Thyroid gland (tissue), 4 donors: ENCODE measurements at regions of chr20 and their contacts with region 1.

Region 1: DNA sequence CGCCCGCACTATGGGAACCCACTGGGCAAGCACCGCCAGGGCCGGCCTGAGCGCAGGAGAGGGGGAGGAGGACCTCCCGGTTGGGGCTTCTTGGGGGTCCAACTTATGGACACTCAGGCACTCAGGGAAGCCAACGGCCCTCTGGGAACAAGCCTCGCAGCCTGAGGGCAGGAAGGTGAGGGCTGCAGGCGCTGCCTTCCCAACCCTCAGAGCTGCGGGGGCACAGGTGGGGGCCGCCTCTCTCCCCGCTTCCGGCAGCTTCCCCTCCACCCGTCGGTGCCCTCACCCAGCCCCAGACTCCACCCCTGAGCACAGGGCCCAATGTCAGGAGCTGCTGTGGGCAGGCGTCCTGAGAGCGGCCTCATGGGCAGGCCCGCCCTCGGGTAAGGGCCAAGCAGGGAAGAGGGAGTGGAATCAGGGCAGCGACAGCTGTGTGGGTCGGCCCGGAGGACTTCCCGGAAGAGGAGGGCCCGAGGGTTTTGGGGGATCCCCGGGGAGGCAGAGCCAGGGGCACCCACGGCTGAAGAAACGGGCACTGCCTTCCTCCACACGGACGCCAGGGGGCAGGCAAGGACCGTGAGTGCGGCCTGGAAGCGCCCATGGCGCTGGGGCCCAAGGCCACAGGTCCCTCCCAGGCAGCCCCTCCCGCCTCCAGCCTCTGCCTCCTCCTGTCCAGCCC is 488 bp upstream of the PTK6 start:
- DNase-seq: peak; percentile 83 to 84
- H3K4me3 ChIP-seq: peak overlapping the region in 1 of 3 donors; percentile 16
- H3K27ac ChIP-seq: peak overlapping the region; percentile 62 to 76 (median 72)
- H3K4me1 ChIP-seq: peaks cover 11 to 21% of the 10 kb centered on the region in 2 donors
- H3K27me3 ChIP-seq: no peaks in the 10 kb centered on the region
- CTCF ChIP-seq: peak; percentile 86 to 99 (median 94)
- POLR2A ChIP-seq: peak in 1 of 2 donors; percentile 26

Region 2: DNA sequence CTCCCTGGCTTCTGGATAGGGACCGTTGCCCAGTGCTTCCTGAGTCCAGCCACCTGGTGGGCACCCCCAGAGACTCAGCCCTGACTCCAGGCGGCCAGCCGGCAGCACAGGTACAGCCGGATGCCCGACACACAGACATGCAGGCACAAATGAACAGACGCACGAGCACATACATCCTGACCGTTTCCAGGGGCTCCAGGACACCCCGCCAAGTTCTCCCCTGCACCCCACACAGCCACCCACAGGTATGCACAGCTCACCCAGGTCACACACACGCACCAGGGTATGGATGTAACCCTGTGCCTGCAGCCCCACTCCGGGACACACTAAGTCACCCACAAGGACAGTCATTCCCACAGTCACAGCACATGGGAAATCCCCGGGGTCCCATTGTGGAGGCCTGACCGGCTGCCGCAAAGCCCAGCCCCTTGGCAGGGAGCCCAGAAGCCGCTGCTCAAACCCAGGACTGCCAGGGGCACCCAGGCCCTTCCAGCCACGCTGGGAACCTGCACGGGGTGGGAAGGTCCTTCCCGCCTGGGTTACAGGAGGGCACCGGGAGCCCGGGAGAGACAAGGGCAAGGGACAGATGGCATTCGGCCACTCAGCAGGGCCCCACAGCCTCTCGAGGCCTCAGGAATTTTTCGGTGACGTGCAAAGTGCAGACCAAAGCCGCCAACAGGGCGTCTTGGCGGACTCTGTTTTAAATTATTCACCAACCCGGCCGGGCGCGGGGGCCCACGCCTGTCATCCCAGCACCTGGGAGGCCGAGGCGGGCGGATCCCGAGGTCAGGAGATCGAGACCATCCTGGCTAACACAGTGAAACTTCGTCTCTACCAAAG is 54.6 kb before region 1 on chr20:
- intact Hi-C with region 1: no loop called
- DNase-seq: peak; percentile 49 to 58
- H3K4me3 ChIP-seq: no peak overlapping the region
- H3K27ac ChIP-seq: no peak overlapping the region
- H3K4me1 ChIP-seq: no peaks in the 10 kb centered on the region
- H3K27me3 ChIP-seq: peaks cover 11% of the 10 kb centered on the region
- CTCF ChIP-seq: no peak
- POLR2A ChIP-seq: no peak

Region 3: GRCh38 chr20:63739130-63740069 is 201.7 kb after region 1 on chr20 and contains the start of gene SLC2A4RG:
- intact Hi-C with region 1: loop called (anchors 5 kb)
- DNase-seq: peak; percentile 84 to 87
- H3K4me3 ChIP-seq: peak within 1 kb of the TSS; percentile 39 to 66 (median 53)
- H3K27ac ChIP-seq: peak within 1 kb of the TSS; percentile 68 to 94 (median 91)
- H3K4me1 ChIP-seq: peaks cover 19 to 29% of the 10 kb centered on the region in 2 donors
- H3K27me3 ChIP-seq: no peaks in the 10 kb centered on the region
- CTCF ChIP-seq: no peak
- POLR2A ChIP-seq: no peak
- total RNA-seq, gene SLC2A4RG: 26.0 to 55.9 (median 39.3) TPM

Region 4: DNA sequence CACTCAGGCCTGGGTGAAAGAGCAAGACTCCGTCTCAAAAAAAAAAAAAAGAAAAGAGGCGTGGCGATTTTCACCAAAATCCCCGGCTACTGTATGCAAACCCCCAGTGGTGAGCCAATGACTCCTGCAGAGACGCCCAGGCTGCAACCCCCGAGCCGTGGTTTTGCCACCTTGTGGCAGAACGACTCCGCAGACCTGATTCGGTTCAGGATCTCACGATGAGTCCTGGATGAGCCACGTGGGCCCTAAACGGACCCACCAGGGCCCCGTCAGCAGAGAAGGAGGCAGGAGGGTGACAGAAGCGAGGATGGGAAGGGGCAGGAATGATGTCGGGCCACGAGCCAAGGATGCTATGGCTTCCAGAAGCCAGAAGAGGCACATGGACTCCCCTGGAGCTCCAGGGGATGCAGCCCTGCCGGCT is 244.4 kb after region 1 on chr20:
- intact Hi-C with region 1: loop called (anchors 10 kb)
- DNase-seq: no peak
- H3K4me3 ChIP-seq: no peak overlapping the region
- H3K27ac ChIP-seq: no peak overlapping the region
- H3K4me1 ChIP-seq: no peaks in the 10 kb centered on the region
- H3K27me3 ChIP-seq: no peaks in the 10 kb centered on the region
- CTCF ChIP-seq: no peak
- POLR2A ChIP-seq: no peak

Region 5: GRCh38 chr20:63864847-63865640 is 327.4 kb after region 1 on chr20 and contains the start of gene TPD52L2:
- intact Hi-C with region 1: loop called (anchors 5 kb)
- DNase-seq: peak; percentile 100
- H3K4me3 ChIP-seq: peak within 1 kb of the TSS; percentile 86 to 95 (median 87)
- H3K27ac ChIP-seq: peak within 1 kb of the TSS; percentile 90 to 96 (median 93)
- H3K4me1 ChIP-seq: peaks cover 10 to 31% of the 10 kb centered on the region in 2 donors
- H3K27me3 ChIP-seq: no peaks in the 10 kb centered on the region
- CTCF ChIP-seq: no peak
- POLR2A ChIP-seq: peak; percentile 41 to 91
- total RNA-seq, gene TPD52L2: 69.4 to 93.3 (median 89.6) TPM

Region 6: GRCh38 chr20:63973636-63974402 is 436.2 kb after region 1 on chr20:
- intact Hi-C with region 1: loop called (anchors 2 kb)
- DNase-seq: peak; percentile 89 to 90
- H3K4me3 ChIP-seq: no peak overlapping the region
- H3K27ac ChIP-seq: no peak overlapping the region
- H3K4me1 ChIP-seq: peaks cover 10 to 23% of the 10 kb centered on the region in 2 donors
- H3K27me3 ChIP-seq: no peaks in the 10 kb centered on the region
- CTCF ChIP-seq: peak; percentile 88 to 99 (median 98)
- POLR2A ChIP-seq: no peak

Region 7: DNA sequence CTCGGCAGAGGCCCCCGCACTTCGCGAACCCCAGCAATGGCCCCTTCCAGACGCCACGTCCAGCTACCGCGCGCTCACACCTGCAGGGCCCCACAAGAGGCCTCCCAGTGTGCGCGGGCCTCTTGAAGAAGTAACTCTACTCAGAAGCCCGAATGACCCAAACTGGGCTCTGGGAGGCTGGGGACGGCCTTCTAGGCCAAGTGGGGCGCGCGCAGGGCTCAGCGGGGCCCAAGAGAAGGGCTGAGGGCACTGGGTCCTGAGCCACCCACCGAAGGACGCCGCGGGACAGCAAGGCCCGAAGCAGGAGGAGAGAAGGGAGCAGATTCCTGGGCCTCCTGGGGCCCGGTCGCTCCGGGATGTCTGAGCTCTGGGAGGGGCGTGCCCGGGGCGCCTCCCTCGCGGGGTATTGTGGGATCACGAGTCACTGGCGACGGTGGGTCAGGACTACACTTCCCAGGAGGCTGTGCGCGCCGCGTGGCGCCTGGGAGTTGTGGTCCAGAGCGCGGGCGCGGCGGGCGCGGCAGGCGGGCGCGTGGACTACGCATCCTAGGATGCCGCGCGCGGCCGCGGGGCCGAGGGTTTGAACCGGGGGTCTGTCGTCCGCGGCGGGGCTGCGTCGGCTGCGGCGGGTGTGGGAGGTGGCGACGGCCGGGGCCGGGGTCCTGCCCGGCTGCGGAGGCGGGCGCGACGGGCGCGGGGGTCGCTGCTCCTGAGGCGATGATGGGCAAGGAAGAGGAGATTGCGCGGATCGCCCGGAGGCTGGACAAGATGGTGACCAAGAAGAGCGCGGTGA is 525.1 kb after region 1 on chr20 and contains the start of gene TCEA2:
- intact Hi-C with region 1: loop called (anchors 10 kb)
- DNase-seq: peak; percentile 97 to 98
- H3K4me3 ChIP-seq: peak within 1 kb of the TSS; percentile 37 to 77 (median 60)
- H3K27ac ChIP-seq: peak within 1 kb of the TSS in 2 of 3 donors; percentile 78 to 87
- H3K4me1 ChIP-seq: peaks cover 16 to 24% of the 10 kb centered on the region in 2 donors
- H3K27me3 ChIP-seq: no peaks in the 10 kb centered on the region
- CTCF ChIP-seq: no peak
- POLR2A ChIP-seq: peak; percentile 54 to 78
- total RNA-seq, gene TCEA2: 20.9 to 43.1 (median 24.4) TPM

Region 8: GRCh38 chr20:64145458-64145857 is 607.8 kb after region 1 on chr20:
- intact Hi-C with region 1: no loop called
- DNase-seq: no peak
- H3K4me3 ChIP-seq: no peak overlapping the region
- H3K27ac ChIP-seq: no peak overlapping the region
- H3K4me1 ChIP-seq: no peaks in the 10 kb centered on the region
- H3K27me3 ChIP-seq: no peaks in the 10 kb centered on the region
- CTCF ChIP-seq: no peak
- POLR2A ChIP-seq: no peak